Activated CD8-positive, alpha-beta T cell treated with anti-CD3 and anti-CD28 coated beads, Interleukin-2, amount 10 ng/mL, durations not matched to agents 7 days and 5 days (primary cell): ENCODE measurements at regions of chr3 and their contacts with region 1.

Region 1: GRCh38 chr3:13657660-13658435 is 108.9 kb downstream of the FBLN2 start:
- DNase-seq: peak; percentile 76
- ATAC-seq: peak; percentile 81
- H3K4me3 Mint-ChIP-seq: no peak overlapping the region
- H3K27ac Mint-ChIP-seq: no peak overlapping the region
- H3K4me1 Mint-ChIP-seq: peaks cover 32% of the 10 kb centered on the region
- H3K27me3 Mint-ChIP-seq: peaks cover 22% of the 10 kb centered on the region

Region 2: DNA sequence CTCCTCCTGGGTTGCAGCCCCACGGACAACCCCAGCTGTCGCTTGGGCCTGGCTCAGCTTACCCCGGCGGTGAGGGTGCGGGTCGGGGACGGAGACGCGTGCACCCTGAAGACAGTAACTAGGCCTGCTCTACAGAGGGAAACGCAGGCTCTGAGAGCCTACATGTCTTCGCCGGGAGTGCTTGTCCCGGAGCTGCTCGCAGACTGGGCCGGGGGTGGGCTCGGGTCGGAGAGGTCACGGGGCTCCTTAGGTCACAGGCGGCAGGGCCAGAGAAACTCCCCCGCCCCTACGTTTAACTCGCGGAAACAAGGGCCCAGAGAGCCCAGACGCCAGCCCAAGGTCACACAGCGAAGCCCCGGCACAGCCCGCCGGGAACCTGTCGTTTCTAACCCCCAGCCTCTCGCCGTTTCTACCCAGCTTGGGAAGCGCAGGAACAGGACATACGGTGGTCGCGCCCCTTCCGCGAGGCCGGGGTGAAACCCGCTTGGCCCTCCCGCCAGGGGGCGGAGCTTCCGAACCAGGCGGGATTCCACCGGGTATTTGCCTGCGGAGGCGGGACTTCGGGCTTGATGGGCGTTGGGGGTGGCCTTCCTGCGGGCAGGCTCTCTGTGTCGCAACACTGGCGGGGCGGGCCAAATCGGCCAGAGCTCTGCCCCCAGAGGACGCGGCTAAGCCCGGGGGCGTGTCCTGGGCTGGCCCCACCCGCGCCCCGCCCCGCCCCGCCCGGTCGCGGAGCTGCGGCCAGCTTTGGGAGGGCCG is 178.1 kb before region 1 on chr3 and contains the start of gene HDAC11:
- CTCF ChIA-PET with region 1: interaction called, 14 read pairs
- POLR2A ChIA-PET with region 1: no interaction called
- DNase-seq: peak; percentile 98
- ATAC-seq: peak; percentile 98
- H3K4me3 Mint-ChIP-seq: peak within 1 kb of the TSS; percentile 90
- H3K27ac Mint-ChIP-seq: peak within 1 kb of the TSS; percentile 87
- H3K4me1 Mint-ChIP-seq: peaks cover 20% of the 10 kb centered on the region
- H3K27me3 Mint-ChIP-seq: peaks cover 3% of the 10 kb centered on the region
- total RNA-seq, gene HDAC11: 0.87 to 0.99 TPM

Region 3: DNA sequence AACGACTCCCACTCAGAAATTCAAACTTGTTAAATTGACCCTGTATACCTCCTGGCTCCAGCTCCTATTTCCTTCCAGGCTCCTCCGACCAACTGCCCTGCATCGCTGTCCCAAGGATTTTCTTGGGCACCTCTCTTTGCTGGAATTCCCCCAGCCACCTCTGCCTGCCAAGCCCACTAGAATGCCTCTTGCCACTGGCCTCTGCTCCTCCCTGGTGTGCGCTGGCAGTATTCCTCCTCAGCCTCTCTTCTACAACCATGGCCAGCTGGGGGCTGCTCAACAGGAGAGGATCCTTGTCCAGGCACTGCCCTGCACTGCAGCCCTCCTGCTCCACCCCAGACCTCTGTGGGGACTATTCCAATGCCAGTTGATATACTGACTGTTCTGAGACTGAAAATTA is 214.6 kb after region 1 on chr3:
- CTCF ChIA-PET with region 1: interaction called, 387 read pairs
- POLR2A ChIA-PET with region 1: no interaction called
- DNase-seq: no peak
- ATAC-seq: no peak
- H3K4me3 Mint-ChIP-seq: no peak overlapping the region
- H3K27ac Mint-ChIP-seq: no peak overlapping the region
- H3K4me1 Mint-ChIP-seq: peaks cover 8% of the 10 kb centered on the region
- H3K27me3 Mint-ChIP-seq: peaks cover 33% of the 10 kb centered on the region

Region 4: GRCh38 chr3:14137004-14137403 is 479.2 kb after region 1 on chr3:
- CTCF ChIA-PET with region 1: no interaction called
- POLR2A ChIA-PET with region 1: no interaction called
- DNase-seq: no peak
- ATAC-seq: no peak
- H3K4me3 Mint-ChIP-seq: no peak overlapping the region
- H3K27ac Mint-ChIP-seq: no peak overlapping the region
- H3K4me1 Mint-ChIP-seq: peaks cover 4% of the 10 kb centered on the region
- H3K27me3 Mint-ChIP-seq: no peaks in the 10 kb centered on the region